H1 (cell line): ENCODE measurements at regions of chr6 and their contacts with region 1.

Region 1: DNA sequence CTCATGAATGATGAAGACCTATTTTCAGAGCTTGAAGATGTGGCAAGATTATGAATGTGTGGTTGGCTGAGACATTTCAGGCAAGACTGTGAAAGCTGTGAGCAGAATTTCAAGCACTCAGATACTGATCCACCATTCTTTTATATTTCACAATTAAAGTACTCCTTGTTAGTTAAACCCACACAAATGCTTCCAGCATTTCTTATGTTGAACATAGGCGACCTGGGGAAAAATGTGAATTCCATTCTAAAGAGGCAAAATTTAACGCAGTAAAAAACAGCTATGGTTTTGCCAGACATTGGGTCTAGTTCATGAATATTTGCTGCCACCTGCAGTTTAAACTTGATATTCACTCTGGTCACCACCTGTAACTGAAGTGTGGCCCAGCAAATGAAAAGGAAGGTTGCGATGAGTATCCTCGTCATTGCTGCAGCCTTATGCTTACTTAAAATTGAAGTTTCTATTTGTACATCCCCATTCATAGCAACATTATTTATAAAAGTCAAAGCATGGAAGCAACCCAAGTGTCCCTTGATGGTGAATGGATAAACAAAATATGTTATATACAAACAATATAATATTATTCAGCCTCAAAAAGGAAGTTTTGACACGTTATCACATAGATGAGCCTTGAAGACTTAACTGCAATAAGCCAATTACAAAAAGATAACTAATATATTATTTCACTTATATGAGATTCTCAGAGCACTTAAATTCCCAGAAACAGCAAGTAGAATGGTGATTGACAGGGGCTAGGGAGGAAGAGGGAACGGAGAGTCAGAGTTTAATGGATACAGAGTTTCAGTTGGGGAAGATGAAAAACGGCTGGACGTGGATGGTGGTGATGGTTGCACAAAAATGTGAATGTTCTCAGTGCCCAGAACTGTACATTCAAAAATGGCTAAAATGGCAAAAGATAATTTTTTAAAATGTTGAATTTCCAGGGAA is 32.4 kb upstream of the FAM184A start:
- DNase-seq: no peak
- H3K4me3 ChIP-seq: no peak overlapping the region
- H3K27ac ChIP-seq: no peak overlapping the region
- H3K4me1 ChIP-seq: peaks cover 0 to 2% (median 0%) of the 10 kb centered on the region in 4 experiments; a peak in 3 of 7 replicates
- H3K27me3 ChIP-seq: peaks cover 0 to 1% (median 0%) of the 10 kb centered on the region in 4 experiments; a peak in 1 of 7 replicates
- CTCF ChIP-seq: peak in 2 of 3 experiments; percentile 61 to 66; a peak in 3 of 4 replicates
- EP300 ChIP-seq: no peak
- POLR2A ChIP-seq: no peak
- RAD21 ChIP-seq: peak; percentile 86 to 92

Region 2: GRCh38 chr6:118963003-118963402 is 147.9 kb before region 1 on chr6:
- CTCF ChIA-PET with region 1: interaction called, 146 read pairs
- POLR2A ChIA-PET with region 1: interaction called, 3 read pairs
- DNase-seq: no peak
- H3K4me3 ChIP-seq: no peak overlapping the region
- H3K27ac ChIP-seq: no peak overlapping the region
- H3K4me1 ChIP-seq: peaks cover 0 to 3% (median 0%) of the 10 kb centered on the region in 4 experiments; a peak in 1 of 7 replicates
- H3K27me3 ChIP-seq: no peaks in the 10 kb centered on the region
- CTCF ChIP-seq: no peak
- EP300 ChIP-seq: no peak
- POLR2A ChIP-seq: no peak
- RAD21 ChIP-seq: 0 out of 4 replicates have a peak, but pooled peaks of 1 of the 2 experiments have one; percentile 3

Region 3: DNA sequence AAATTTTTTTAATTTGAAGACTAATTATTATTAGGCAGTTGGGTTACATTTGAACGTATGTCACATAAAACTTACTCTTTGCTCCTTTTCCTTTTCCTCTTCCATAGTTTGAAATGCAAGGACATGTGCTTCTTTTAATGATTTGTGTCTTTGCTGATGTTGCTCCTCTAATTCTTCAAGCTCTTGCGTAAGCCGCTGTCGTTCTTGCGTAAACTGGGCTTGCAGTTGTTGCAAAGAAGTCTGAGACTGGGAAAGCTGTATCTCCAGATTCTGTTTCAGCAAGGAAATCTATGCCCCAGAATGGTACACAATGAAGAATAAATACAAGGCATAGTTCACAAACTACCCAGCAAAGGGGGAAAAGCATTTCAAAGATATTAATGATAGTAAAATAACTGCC is 130.8 kb before region 1 on chr6:
- CTCF ChIA-PET with region 1: interaction called, 14 read pairs
- POLR2A ChIA-PET with region 1: no interaction called
- DNase-seq: no peak
- H3K4me3 ChIP-seq: no peak overlapping the region
- H3K27ac ChIP-seq: no peak overlapping the region
- H3K4me1 ChIP-seq: no peaks in the 10 kb centered on the region
- H3K27me3 ChIP-seq: no peaks in the 10 kb centered on the region
- CTCF ChIP-seq: no peak
- EP300 ChIP-seq: no peak
- POLR2A ChIP-seq: no peak
- RAD21 ChIP-seq: no peak

Region 4: GRCh38 chr6:119078376-119079282 is 32.2 kb before region 1 on chr6 and contains the start of gene FAM184A:
- CTCF ChIA-PET with region 1: interaction called, 14 read pairs
- POLR2A ChIA-PET with region 1: no interaction called
- DNase-seq: peak; percentile 7 to 80
- H3K4me3 ChIP-seq: peak within 1 kb of the TSS; percentile 47 to 66 (median 62)
- H3K27ac ChIP-seq: no peak within 1 kb of the TSS
- H3K4me1 ChIP-seq: peaks cover 0 to 5% (median 2%) of the 10 kb centered on the region in 4 experiments; a peak in 3 of 7 replicates
- H3K27me3 ChIP-seq: peaks cover 0 to 18% (median 6%) of the 10 kb centered on the region in 4 experiments; a peak in 3 of 7 replicates
- CTCF ChIP-seq: peak; percentile 56 to 75 (median 72)
- EP300 ChIP-seq: no peak
- POLR2A ChIP-seq: no peak; a peak in 1 of 3 replicates
- RAD21 ChIP-seq: peak; percentile 17 to 56; a peak in 3 of 4 replicates
- total RNA-seq, gene FAM184A: 11.3 and 12.1 TPM in 2 replicates

Region 5: DNA sequence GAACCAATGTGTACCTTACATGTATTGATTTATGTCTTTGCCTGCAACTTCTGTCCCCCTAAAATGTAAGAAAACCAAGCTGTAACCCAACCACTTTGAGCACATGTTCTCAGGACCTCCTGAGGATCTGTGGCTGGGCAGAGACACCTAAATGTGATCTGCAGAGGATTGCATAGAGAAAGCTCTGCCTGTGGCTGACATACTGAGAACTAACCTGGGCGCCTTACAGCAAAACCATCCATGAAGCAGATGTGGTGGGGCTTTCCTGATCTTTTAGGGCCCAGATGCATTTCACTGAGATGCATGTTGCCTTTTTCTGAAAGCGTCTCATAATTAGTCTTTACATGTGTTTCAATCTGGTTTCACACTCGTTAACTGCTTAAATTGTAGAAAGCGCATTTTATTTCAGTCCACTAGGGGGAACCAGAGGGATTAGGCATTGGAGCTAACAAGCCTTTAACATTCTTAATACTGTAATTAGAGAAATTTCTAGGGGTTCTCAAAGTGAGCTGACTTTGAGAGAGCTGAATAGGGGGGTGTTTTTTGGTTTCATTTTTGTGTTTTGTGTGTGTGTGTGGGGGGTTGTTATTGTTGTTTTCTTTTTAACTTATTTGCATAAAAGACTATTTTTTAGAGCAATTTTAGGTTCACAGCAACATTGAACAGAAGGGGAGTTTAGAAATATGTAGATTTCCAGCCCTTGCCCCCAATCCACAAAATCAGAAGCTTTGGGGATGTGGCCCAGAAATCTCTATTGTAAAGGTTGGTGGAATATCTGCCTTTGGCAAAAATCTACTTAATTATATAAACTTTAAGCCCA is 18.5 kb after region 1 on chr6:
- CTCF ChIA-PET with region 1: interaction called, 16 read pairs
- POLR2A ChIA-PET with region 1: no interaction called
- DNase-seq: peak in 1 of 2 experiments; percentile 63
- H3K4me3 ChIP-seq: no peak overlapping the region
- H3K27ac ChIP-seq: no peak overlapping the region
- H3K4me1 ChIP-seq: peaks cover 0 to 4% (median 3%) of the 10 kb centered on the region in 4 experiments; a peak in 5 of 7 replicates
- H3K27me3 ChIP-seq: no peaks in the 10 kb centered on the region
- CTCF ChIP-seq: peak in 2 of 3 experiments; percentile 46 to 75; a peak in 2 of 4 replicates
- EP300 ChIP-seq: no peak
- POLR2A ChIP-seq: no peak
- RAD21 ChIP-seq: peak; percentile 65 to 70